Panc1 (cell line): ENCODE measurements at regions of chr19 and their contacts with region 1.

Region 1: DNA sequence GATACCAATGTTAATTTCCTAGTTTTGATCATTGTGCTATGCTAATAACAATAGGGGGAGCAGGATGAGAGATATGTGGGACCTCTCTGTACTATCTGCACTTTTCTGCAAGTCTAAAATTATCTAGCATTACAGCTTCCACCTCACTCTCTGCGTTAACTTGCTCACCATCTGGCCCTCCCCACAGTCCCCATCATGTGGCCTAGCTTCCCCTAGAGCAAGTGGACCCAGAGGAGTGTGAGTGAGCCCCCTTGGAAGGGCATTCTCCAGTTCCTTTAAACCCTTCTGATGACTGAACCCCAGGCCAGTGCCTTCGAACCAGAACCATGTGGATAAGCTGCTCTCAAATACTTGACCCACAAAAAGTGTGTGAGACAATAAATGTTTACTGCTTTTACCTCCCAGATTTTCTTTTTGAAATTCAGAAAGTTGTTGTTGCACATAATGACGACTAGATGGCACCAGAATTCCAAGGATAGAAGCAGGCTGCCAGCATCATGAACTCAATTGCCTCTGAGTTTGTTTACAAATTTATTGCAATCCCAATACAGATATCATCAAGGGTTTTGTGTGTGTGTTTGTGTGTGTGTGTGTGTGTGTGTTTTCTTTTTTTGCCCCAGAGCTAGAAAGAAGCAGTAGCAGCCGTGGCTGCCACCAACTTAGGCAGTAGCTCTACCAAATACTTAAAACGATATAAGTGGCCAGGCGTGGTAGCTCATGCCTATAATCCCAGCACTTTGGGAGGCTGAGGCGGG is 49.0 kb upstream of the ZNF780A start:
- DNase-seq: peak; percentile 100
- ATAC-seq: peak; percentile 76
- H3K4me3 ChIP-seq: no peak overlapping the region
- H3K27ac ChIP-seq: no peak overlapping the region
- H3K4me1 ChIP-seq: no peaks in the 10 kb centered on the region
- H3K27me3 ChIP-seq: peaks cover 43% of the 10 kb centered on the region
- CTCF ChIP-seq: no peak

Region 2: DNA sequence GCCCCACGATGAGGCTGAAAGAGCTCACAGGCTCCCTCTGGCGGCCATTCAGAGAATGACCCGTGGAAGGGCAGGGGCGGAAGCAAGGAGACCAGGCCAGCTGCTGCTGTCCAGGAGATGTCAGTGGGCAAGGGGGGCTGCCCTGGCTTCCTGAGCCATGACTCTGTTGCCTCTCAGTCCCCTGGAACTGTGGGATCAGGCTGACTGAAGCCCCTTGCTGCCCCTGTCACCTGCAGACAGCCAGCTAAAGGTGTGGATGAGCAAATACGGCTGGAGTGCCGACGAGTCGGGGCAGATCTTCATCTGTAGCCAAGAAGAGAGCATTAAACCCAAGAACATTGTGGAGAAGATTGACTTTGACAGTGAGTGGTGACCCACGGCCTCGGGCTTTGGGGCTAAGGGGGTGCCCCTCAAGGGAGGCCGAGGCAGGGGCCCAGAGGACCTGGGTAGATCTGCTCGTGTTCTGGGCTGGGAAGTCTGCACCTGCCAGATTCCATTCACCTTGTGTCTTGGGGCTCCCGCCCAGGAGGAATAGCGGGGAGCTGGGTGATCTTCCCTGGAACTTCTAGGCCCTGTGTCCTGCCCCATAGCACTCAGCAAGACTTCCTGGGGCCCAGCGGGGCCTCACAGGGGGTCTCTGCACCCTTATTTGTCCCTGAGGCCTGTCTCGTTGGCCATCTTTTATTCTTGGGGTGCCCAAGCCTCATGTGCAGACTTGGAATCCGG is 1504.8 kb before region 1 on chr19:
- CTCF ChIA-PET with region 1: interaction called, 5 read pairs
- POLR2A ChIA-PET with region 1: interaction called, 12 read pairs
- in situ Hi-C with region 1: no loop called
- intact Hi-C with region 1: no loop called
- DNase-seq: no peak
- ATAC-seq: peak; percentile 73
- H3K4me3 ChIP-seq: no peak overlapping the region
- H3K27ac ChIP-seq: no peak overlapping the region
- H3K4me1 ChIP-seq: peaks cover 4% of the 10 kb centered on the region; the same call in 1 of the 2 replicates
- H3K27me3 ChIP-seq: no peaks in the 10 kb centered on the region
- CTCF ChIP-seq: no peak

Region 3: DNA sequence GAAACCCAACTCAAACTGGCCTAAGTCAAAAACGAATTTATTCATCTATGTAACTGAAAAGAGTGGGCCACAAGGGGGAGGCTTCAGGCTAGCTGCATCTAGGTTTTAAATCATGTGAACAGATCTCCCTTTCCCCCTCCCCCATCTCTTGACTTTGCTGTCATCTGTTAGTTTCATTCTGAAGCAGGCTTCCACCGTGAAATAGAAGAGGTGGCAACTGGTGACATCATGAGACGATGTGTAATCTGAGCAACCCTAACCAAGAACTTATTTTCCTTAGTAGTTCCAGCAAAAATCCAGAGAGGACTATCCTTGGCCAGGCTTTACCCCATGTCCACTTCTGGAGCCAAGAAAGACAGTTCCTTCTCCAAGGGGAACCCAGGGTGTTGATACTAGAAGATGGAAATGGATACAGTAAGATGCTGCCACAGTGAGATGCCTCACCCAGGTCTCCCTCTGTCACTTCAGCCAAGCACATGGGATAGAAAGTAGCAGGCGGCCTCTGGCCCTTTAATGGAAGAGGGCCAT is 788.1 kb before region 1 on chr19:
- CTCF ChIA-PET with region 1: no interaction called
- POLR2A ChIA-PET with region 1: interaction called, 17 read pairs
- in situ Hi-C with region 1: no loop called
- intact Hi-C with region 1: no loop called
- DNase-seq: no peak
- ATAC-seq: peak; percentile 6
- H3K4me3 ChIP-seq: no peak overlapping the region
- H3K27ac ChIP-seq: no peak overlapping the region
- H3K4me1 ChIP-seq: no peaks in the 10 kb centered on the region
- H3K27me3 ChIP-seq: no peaks in the 10 kb centered on the region
- CTCF ChIP-seq: no peak

Region 4: DNA sequence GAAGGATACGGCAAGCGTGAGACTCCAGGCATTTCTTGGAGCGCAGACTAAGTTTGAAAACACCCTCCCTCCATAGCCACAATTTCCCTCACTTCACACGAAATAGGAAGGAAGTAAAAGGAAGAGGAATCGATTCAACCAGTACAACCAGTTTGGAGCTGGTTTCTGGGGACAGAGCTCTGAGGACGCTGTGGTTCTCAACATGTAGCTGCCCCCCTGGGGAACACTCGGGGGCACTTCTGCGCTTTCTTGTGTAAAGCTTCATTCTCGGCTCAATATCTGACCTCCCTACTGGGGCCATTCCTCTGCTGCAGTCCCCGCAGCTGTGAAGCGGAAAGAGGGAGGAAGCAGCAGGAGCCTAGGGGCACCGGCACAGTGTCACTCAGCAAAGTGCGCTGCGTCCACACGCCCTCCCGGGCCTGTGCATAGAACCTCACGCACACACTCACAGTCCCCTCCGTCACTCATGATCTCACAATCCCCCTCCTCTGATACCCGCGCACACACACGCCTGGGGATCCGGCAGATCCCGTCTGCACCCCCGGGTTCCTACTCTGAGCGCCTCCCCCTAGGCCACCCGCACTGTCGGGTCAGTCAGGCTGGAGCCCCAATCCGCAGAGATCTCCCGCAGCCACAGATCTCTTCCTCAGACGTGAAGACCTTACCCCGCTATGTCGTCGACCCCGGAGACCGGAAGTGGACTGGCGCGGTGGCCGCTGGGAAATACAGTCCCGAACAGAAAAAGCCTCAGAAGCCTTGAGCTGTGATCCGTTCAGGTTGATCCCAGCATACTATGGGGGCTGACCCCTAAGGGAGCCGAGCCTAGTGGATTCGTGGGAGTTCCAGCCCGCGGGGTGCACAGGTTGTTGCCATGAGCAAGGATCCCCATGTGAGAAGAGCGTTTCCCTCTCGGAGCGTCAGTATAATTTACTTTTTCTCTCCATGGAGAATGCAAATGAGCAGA is 49.2 kb before region 1 on chr19 and contains the start of gene ZNF780A:
- CTCF ChIA-PET with region 1: interaction called, 8 read pairs
- POLR2A ChIA-PET with region 1: no interaction called
- in situ Hi-C with region 1: loop called (anchors 5 kb)
- intact Hi-C with region 1: no loop called
- DNase-seq: peak; percentile 100
- ATAC-seq: peak; percentile 99
- H3K4me3 ChIP-seq: peak within 1 kb of the TSS; percentile 36 to 48
- H3K27ac ChIP-seq: peak within 1 kb of the TSS; percentile 83
- H3K4me1 ChIP-seq: peaks cover 15% of the 10 kb centered on the region
- H3K27me3 ChIP-seq: no peaks in the 10 kb centered on the region; the same call in 1 of the 2 replicates
- CTCF ChIP-seq: no peak
- total RNA-seq, gene ZNF780A: 251 TPM

Region 5: DNA sequence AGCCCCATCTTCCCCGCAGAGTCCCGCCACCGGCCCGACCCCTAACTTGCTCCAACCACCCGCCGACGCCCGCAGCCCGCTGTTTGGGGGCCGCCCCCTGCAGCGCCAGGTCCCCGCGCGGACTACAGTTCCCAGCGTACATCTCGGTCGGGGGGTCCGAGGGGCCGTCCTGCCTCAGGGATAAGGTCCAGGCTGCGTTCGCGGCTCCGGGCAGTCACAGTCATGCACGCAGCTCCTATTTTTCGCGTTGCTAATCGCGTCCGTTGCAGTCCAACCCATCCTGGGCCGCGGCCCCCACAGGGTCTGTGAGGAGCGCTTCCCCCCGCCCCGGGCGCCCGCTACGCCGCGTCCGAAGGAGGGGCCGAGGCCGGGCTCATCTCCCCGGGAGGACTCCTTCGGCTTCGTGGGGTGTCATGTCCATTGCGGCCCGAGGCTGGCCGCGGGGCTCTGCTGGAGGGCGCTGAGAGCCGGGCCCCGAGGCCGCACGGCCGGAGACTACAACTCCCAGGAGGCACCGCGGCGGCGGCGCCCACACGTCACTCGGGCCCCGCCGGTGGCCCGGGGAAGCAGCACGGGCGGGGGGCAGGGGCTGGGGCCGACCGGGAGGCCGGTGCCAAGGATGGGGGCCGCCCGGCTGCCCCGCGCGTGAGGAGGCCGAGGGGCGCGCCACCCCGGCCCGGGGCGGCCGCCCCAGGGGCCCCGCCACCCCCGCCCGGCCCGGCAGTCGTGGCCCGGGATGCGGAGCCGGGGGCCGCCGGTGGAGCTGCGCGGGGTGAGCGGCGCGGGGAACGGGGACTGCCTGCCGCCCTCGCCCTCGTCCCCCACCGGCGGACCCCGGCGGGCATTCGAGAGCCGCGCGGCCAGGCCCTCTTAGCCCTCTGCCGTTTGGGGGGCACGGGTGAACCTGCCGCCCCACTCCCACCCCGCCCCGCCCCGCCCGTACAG is 51.5 kb after region 1 on chr19 and contains the start of gene MAP3K10:
- CTCF ChIA-PET with region 1: interaction called, 13 read pairs
- POLR2A ChIA-PET with region 1: interaction called, 3 read pairs
- in situ Hi-C with region 1: loop called (anchors 5 kb)
- intact Hi-C with region 1: no loop called
- DNase-seq: peak; percentile 99
- ATAC-seq: peak; percentile 97
- H3K4me3 ChIP-seq: peak within 1 kb of the TSS; percentile 36 to 57
- H3K27ac ChIP-seq: peak within 1 kb of the TSS; percentile 49
- H3K4me1 ChIP-seq: peaks cover 23% of the 10 kb centered on the region
- H3K27me3 ChIP-seq: peaks cover 9% of the 10 kb centered on the region
- CTCF ChIP-seq: no peak
- total RNA-seq, gene MAP3K10: 255 TPM

Region 6: DNA sequence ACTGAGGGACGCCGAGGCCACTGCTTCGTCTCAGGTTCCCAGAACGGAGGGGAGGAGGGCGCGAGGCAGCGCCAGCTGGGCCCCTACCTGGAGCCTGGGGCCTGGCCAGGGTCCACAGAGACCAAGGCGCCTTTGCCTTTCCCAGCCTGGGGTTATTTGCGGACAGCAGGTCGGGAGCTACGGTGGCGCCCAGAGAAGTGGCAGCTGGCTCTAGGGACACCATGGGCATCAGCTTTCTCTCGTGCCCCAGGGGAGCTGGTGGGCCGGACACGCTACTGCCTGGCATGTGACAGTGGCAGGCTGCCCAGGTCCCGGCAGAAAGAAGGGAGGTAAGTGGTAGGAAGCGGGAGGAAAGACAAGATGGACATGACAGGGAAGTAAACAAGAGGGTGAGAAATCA is 126.4 kb after region 1 on chr19:
- CTCF ChIA-PET with region 1: interaction called, 13 read pairs
- POLR2A ChIA-PET with region 1: interaction called, 5 read pairs
- in situ Hi-C with region 1: no loop called
- intact Hi-C with region 1: no loop called
- DNase-seq: no peak
- ATAC-seq: no peak
- H3K4me3 ChIP-seq: no peak overlapping the region
- H3K27ac ChIP-seq: no peak overlapping the region
- H3K4me1 ChIP-seq: no peaks in the 10 kb centered on the region
- H3K27me3 ChIP-seq: no peaks in the 10 kb centered on the region
- CTCF ChIP-seq: no peak